ENCODE measurements at regions of chr3 and their contacts with region 1.

Region 1: DNA sequence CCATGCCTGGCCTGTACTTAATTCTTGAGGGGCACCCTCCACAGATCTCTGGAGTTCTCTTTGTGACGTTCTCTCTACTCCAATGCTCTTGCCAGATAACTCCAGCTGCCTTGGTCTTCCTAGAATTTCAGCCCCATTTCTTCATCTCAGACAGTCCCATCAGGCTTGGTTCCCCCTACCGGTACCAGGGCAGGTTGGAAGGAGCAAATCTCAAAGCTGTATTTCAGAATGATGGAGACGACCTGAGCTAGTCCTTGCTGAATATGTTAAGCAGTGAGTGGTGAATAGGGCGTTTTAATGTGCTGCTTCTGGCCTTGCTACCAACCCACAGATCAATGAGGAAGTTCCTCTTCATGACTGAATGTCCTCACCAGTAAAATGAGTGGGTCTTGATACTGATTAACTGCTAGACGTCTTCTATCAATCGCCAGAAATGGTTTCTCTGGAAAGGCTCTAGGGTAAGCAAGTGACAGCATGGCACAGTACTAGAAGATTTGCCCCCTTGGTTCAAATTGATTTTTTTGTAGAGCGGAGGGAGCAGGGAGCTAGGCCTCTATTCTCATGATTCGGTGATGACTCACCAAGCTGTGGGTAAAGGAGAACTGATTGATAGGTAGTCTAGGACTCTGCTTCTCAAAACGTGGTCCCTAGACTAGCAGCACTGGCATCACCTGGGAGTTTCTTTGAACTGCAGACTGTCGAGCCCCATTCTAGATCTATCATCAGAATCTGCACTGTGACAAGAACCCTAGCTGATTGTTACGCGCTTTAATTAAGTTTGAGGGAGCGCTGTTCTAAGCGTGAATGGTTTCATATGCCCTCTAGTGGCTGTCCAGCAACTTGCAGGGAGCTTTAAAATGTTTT is 67.8 kb downstream of the UBP1 start:
- DNase-seq: no peak
- ATAC-seq: peak; percentile 82
- H3K4me3 ChIP-seq: no peak overlapping the region
- H3K27ac ChIP-seq: no peak overlapping the region
- H3K4me1 ChIP-seq: no peaks in the 10 kb centered on the region
- H3K27me3 ChIP-seq: no peaks in the 10 kb centered on the region
- CTCF ChIP-seq: peak; percentile 84 to 95 (median 86)
- EP300 ChIP-seq: no peak
- POLR2A ChIP-seq: no peak
- RAD21 ChIP-seq: peak; percentile 89

Region 2: GRCh38 chr3:33074217-33075067 is 298.0 kb before region 1 on chr3:
- CTCF ChIA-PET with region 1: interaction called, 8 read pairs
- POLR2A ChIA-PET with region 1: no interaction called
- RAD21 ChIA-PET with region 1: no interaction called
- SMC1A ChIA-PET with region 1: interaction called, 10 read pairs
- in situ Hi-C with region 1: no loop called
- intact Hi-C with region 1: no loop called
- DNase-seq: no peak
- ATAC-seq: peak; percentile 97
- H3K4me3 ChIP-seq: no peak overlapping the region
- H3K27ac ChIP-seq: no peak overlapping the region
- H3K4me1 ChIP-seq: no peaks in the 10 kb centered on the region
- H3K27me3 ChIP-seq: no peaks in the 10 kb centered on the region
- CTCF ChIP-seq: peak; percentile 88 to 94 (median 93)
- EP300 ChIP-seq: no peak
- POLR2A ChIP-seq: no peak
- RAD21 ChIP-seq: peak; percentile 92

Region 3: DNA sequence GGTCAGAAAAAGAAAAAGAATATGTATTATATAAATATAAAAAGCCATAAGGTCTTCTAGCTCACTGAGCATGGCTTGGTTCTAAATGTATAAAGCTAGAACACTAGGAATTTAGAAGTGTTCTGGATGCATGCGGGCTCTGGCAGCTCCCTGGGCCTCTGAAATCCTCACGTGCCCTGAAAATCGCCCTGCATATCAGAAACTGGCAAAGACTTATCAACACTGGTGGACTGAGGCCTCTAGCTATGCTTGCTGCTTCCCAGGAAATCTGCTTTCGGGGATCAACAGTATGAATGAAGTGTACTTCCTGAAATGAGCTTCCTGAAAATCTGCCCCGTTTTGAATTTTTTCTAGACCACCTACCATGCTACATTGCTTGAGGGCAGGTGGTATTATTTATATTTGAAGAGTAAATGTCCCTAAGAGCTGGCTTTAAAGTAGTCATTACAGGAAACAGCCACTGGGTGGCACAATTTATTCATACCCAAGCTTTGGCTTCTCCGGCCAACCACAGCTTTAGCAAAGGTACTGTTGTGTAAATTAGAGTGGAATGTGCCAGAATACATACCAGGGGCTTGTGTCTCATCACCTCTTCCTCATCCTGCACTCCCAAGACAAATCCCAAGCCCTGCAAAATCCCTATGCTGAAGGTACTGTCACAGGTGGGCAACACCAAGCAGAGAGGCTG is 241.0 kb before region 1 on chr3:
- CTCF ChIA-PET with region 1: interaction called, 319 read pairs
- POLR2A ChIA-PET with region 1: interaction called, 3 read pairs
- RAD21 ChIA-PET with region 1: interaction called, 160 read pairs
- SMC1A ChIA-PET with region 1: interaction called, 135 read pairs
- in situ Hi-C with region 1: loop called (anchors 5 kb)
- intact Hi-C with region 1: loop called (anchors 1 kb)
- DNase-seq: no peak
- ATAC-seq: peak; percentile 92
- H3K4me3 ChIP-seq: no peak overlapping the region
- H3K27ac ChIP-seq: no peak overlapping the region
- H3K4me1 ChIP-seq: no peaks in the 10 kb centered on the region
- H3K27me3 ChIP-seq: no peaks in the 10 kb centered on the region
- CTCF ChIP-seq: peak; percentile 55 to 85 (median 72)
- EP300 ChIP-seq: no peak
- POLR2A ChIP-seq: no peak
- RAD21 ChIP-seq: peak; percentile 93

Region 4: GRCh38 chr3:33385423-33385822 is 13.0 kb after region 1 on chr3:
- CTCF ChIA-PET with region 1: interaction called, 32 read pairs
- POLR2A ChIA-PET with region 1: interaction called, 3 read pairs
- RAD21 ChIA-PET with region 1: no interaction called
- SMC1A ChIA-PET with region 1: interaction called, 7 read pairs
- in situ Hi-C with region 1: no loop called
- intact Hi-C with region 1: no loop called
- DNase-seq: no peak
- ATAC-seq: no peak
- H3K4me3 ChIP-seq: no peak overlapping the region
- H3K27ac ChIP-seq: peak overlapping the region; percentile 46
- H3K4me1 ChIP-seq: no peaks in the 10 kb centered on the region
- H3K27me3 ChIP-seq: no peaks in the 10 kb centered on the region
- CTCF ChIP-seq: no peak
- EP300 ChIP-seq: no peak
- POLR2A ChIP-seq: peak; percentile 46; the same call in 1 of the 2 replicates
- RAD21 ChIP-seq: no peak

Region 5: DNA sequence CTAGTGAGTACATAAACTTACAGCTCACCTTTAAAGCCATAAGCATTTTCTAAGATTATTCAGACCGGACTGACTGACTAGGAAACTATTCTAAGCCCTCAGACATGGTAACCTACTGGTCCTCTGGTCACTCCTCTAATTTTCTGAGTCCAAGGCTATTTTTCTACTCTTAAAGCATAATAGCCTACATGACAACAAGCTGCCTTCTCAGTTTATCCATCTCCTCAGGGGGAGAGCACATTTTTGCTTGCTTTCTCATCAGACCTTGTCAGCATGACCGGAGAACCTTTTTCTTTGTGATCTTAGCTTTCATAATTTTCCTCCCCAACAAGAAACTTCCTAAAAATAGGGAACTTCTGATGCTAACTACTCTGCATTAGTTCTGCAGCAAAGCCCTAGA is 29.3 kb after region 1 on chr3:
- CTCF ChIA-PET with region 1: interaction called, 12 read pairs
- POLR2A ChIA-PET with region 1: no interaction called
- RAD21 ChIA-PET with region 1: no interaction called
- SMC1A ChIA-PET with region 1: interaction called, 4 read pairs
- in situ Hi-C with region 1: no loop called
- intact Hi-C with region 1: no loop called
- DNase-seq: no peak
- ATAC-seq: no peak
- H3K4me3 ChIP-seq: no peak overlapping the region
- H3K27ac ChIP-seq: no peak overlapping the region
- H3K4me1 ChIP-seq: no peaks in the 10 kb centered on the region
- H3K27me3 ChIP-seq: no peaks in the 10 kb centered on the region
- CTCF ChIP-seq: no peak
- EP300 ChIP-seq: no peak
- POLR2A ChIP-seq: no peak
- RAD21 ChIP-seq: no peak

Region 6: GRCh38 chr3:33440323-33441232 is 68.1 kb after region 1 on chr3 and contains the start of gene UBP1:
- CTCF ChIA-PET with region 1: interaction called, 19 read pairs
- POLR2A ChIA-PET with region 1: interaction called, 3 read pairs
- RAD21 ChIA-PET with region 1: interaction called, 3 read pairs
- SMC1A ChIA-PET with region 1: interaction called, 5 read pairs
- in situ Hi-C with region 1: no loop called
- intact Hi-C with region 1: no loop called
- DNase-seq: peak; percentile 100
- ATAC-seq: peak; percentile 89
- H3K4me3 ChIP-seq: peak within 1 kb of the TSS; percentile 86
- H3K27ac ChIP-seq: peak within 1 kb of the TSS; percentile 99
- H3K4me1 ChIP-seq: no peaks in the 10 kb centered on the region
- H3K27me3 ChIP-seq: no peaks in the 10 kb centered on the region
- CTCF ChIP-seq: 0 out of 6 replicates have a peak, but pooled peaks of 2 of the 3 experiments have one; percentile 2 to 10
- EP300 ChIP-seq: no peak
- POLR2A ChIP-seq: peak; percentile 96
- RAD21 ChIP-seq: no peak
- polyA plus RNA-seq, gene UBP1: 9.8 to 14.4 TPM

Measured in GM12878 (cell line).